ENCODE measurements at regions of chr14 and their contacts with region 1.

Region 1: GRCh38 chr14:76876076-76876475 is 49.9 kb downstream of the LRRC74A start:
- H3K4me3 ChIP-seq: no peak overlapping the region
- H3K27ac ChIP-seq: no peak overlapping the region
- H3K4me1 ChIP-seq: no peaks in the 10 kb centered on the region
- CTCF ChIP-seq: peak; percentile 64

Region 2: DNA sequence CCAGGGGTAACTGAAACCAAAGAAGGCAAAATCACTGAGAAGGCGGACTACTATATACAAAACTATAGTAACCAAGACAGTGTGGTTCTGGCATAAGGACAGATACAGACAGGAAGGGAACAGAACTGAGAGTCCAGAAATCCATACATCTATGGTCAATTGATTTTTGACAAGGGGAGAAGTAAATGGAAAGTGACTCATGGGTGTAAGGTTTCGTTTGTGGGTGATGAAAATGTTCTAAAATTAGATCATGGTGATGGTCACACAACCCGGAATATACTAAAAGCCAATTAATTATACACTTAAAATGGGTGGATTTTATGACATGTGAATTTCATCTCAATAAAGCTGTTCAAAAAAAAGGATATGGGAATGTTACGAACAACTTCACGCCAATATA is 82.1 kb before region 1 on chr14:
- CTCF ChIA-PET with region 1: no interaction called
- POLR2A ChIA-PET with region 1: no interaction called
- H3K4me3 ChIP-seq: no peak overlapping the region
- H3K27ac ChIP-seq: no peak overlapping the region
- H3K4me1 ChIP-seq: no peaks in the 10 kb centered on the region
- CTCF ChIP-seq: no peak

Region 3: DNA sequence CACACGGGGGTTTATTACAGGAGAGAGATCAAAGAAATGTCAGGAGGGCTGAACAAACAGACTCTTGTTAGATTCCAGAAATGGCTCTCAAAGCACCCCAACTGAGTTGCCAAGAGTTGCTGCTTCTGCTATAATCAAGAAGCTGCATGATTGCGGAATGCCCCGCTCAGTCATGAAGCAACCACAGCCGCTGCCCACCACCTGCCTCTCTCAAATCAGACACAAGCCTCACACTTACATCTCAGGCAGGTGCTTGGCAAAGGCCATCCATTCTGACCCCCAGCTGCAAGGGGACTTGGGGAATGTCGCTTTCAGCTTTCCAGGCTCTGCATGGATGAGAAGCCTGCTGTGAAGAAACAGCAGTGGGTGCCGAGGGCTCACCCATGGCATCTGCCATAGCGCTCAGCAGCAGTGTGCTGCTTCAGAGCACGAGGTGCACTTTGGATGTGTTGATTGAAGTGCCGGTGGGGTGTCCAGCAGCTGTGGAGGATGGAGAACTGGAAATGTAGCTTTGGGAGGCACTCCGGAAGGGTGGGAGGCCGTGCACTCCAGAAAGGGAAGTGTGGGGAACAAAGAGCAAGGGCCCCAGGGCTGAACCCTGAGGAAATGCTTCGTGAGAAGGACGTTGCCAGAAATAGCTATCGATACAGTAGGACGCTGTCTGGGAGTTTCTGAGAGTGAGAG is 12.2 kb before region 1 on chr14:
- CTCF ChIA-PET with region 1: interaction called, 14 read pairs
- POLR2A ChIA-PET with region 1: no interaction called
- H3K4me3 ChIP-seq: no peak overlapping the region
- H3K27ac ChIP-seq: no peak overlapping the region
- H3K4me1 ChIP-seq: no peaks in the 10 kb centered on the region
- CTCF ChIP-seq: no peak

Region 4: DNA sequence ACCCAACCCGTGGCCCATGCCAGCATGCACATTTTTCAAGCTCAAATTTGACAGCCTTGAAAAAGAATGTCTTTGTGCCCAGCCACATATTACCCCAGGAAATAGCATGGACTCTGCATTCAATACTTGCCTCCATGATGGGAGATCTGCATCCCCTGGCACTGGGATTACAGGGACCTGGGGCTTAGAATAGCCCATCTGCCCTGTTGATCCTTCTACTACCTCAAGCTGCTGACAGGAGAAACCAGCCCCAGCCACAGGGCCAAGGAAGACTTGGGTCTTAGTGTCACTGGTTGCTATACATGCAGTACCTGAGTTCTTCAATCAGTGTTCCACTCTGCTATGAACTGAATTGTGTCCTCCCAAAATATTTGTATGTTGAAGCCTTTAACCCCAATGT is 35.4 kb after region 1 on chr14:
- CTCF ChIA-PET with region 1: interaction called, 60 read pairs
- POLR2A ChIA-PET with region 1: no interaction called
- H3K4me3 ChIP-seq: no peak overlapping the region
- H3K27ac ChIP-seq: no peak overlapping the region
- H3K4me1 ChIP-seq: no peaks in the 10 kb centered on the region
- CTCF ChIP-seq: no peak

Region 5: DNA sequence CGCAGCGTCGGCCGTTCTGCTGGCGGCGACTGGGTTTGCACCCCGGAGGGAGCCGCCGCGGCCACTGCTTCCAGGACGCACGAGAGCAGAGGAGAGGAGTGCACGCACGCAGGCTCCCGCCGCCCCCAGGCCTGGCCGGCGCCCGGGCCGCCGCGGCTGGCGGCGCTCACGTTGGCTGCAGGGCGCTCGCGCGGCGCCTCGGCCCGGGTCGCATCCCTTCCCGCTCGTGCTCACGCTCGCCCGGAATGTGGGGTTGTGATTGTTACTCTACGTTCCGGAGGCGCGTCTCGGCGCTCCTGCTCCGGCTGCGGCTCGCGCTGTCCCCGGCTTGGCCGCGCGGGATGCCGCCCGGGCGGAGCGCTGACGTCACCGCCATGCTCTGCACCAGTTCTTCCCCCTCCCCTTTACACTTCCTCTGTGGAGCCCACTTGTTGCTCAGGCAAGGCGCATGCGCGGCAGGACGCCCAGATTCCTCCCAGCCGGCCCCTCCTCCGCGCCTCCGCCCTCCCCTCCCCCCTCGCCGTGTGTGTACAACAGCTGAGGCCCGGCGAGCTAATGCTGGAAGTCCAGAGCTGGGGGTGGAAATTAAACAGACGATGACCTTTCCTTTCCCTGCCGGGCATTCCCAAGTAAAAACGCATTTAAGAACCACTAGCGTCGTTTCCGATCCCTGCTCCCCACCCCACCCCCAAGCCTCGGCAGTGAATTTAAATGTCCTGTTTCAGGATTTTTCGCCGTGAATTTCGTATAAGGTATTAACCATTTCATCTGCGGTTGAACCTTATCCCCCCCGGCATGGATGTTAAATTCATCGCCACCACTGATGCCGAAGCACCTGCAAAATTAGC is 152.5 kb after region 1 on chr14 and contains the start of gene IRF2BPL:
- CTCF ChIA-PET with region 1: interaction called, 10 read pairs
- POLR2A ChIA-PET with region 1: interaction called, 4 read pairs
- H3K4me3 ChIP-seq: peak within 1 kb of the TSS; percentile 85
- H3K27ac ChIP-seq: peak within 1 kb of the TSS; percentile 100
- H3K4me1 ChIP-seq: peaks cover 26% of the 10 kb centered on the region
- CTCF ChIP-seq: no peak

Region 6: DNA sequence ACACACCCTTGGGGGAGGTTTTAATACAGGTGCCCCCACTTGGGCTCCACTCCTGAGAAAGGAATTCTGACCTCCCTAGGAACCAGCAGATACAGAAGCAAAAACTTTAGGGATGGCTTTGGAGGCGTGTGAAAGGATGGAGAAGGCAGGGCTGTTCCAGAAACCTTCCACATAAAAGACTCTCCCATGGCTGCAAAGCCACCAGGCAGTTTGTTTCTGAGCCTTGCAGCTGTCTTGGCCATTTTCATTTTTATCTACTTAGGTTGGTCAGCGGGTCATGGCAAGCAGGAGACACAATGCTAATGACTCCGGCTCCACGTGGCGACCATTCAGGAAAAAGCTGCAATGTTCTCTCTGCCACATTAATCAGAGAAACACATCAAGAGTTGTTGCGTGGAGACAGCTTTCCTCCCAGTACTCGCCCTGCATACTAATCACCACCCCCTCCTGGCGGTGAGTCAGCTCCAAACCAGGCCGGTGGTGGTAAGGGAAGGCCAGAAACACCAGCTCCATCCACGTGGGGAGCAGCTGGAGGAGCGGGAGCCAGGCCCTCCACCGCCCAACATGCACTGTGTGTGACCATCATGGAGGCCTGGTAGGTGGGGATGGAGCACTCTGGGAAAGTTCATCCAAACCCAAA is 183.3 kb after region 1 on chr14:
- CTCF ChIA-PET with region 1: interaction called, 461 read pairs
- POLR2A ChIA-PET with region 1: interaction called, 4 read pairs
- H3K4me3 ChIP-seq: no peak overlapping the region
- H3K27ac ChIP-seq: no peak overlapping the region
- H3K4me1 ChIP-seq: no peaks in the 10 kb centered on the region
- CTCF ChIP-seq: no peak

Region 7: DNA sequence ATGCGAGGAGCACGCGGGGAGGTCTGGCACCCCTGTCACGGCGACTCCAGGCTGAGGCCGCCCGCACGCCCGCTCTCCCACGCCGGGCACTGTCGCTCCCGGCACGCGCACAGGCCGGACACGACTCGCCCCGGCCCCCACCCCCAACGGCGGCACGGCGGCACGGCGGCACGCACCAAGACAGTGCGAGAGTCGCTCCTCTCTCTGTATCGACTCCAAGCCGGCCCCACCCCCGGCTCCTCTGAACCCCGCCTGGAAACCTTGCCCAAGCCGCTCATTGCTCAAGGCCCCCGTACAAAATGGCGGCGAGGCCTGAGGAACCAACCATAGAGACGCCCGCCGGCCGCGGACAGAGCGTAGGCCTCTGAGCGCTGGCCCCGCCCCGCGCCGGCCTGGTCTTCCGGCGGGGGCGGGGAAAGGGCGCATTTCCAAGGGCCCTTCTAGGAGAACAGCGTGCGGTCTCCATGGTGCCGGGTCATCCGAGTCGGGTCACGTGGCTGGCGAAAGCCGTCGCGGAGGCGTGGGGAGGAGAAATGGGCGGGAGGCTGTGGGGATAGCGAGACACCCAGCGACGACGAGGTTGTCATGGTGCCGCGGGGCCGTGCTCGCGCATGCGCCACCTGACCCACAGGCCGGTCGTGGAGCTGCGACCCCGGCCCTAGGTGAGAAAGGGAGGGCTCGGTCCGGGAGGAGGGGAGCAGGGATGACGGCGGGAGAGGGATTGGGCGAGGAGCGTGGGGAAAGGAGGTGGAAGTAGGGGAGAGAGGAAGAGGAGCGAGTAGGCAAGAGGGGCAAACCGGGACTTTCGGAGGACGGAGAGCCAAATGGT is 221.8 kb after region 1 on chr14 and contains the start of gene CIPC:
- CTCF ChIA-PET with region 1: interaction called, 63 read pairs
- POLR2A ChIA-PET with region 1: interaction called, 4 read pairs
- H3K4me3 ChIP-seq: peak within 1 kb of the TSS; percentile 88
- H3K27ac ChIP-seq: peak within 1 kb of the TSS; percentile 87
- H3K4me1 ChIP-seq: peaks cover 18% of the 10 kb centered on the region
- CTCF ChIP-seq: peak; percentile 41; the same call in 1 of the 2 replicates

Region 8: DNA sequence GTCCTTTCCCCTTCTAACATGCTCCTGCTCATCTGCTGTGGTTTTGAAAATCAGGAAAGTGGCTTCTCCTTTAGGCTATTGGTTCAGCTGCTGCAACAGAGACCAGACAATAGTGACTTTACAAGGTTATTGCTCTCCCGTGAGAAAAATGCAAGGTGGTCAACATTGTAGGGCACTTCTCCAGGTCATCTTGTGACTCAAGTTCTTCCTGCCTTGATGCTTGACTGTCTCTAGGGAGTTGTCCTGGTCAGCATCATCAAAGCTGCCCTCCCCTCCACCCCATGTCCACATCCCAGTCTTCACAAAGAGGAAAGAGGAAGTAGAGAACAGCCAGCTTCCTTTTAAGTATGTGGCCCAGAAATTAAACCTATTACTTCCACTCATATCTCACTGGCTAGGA is 301.6 kb after region 1 on chr14:
- CTCF ChIA-PET with region 1: no interaction called
- POLR2A ChIA-PET with region 1: no interaction called
- H3K4me3 ChIP-seq: no peak overlapping the region
- H3K27ac ChIP-seq: no peak overlapping the region
- H3K4me1 ChIP-seq: 0 out of 2 replicates have a peak, but pooled peaks cover 3% of the 10 kb centered on the region
- CTCF ChIP-seq: no peak